ENCODE measurements at regions of chr1 and their contacts with region 1.

Region 1: GRCh38 chr1:156689035-156689952 is 12.1 kb upstream of the NES start:
- DNase-seq: peak; percentile 72 to 84
- H3K4me3 ChIP-seq: peak overlapping the region; percentile 48; the same call in 1 of the 2 replicates
- H3K27ac ChIP-seq: no peak overlapping the region
- H3K4me1 ChIP-seq: peaks cover 82% of the 10 kb centered on the region
- H3K27me3 ChIP-seq: no peaks in the 10 kb centered on the region
- CTCF ChIP-seq: peak; percentile 95

Region 2: GRCh38 chr1:156490401-156491032 is 198.8 kb before region 1 on chr1:
- CTCF ChIA-PET with region 1: no interaction called
- POLR2A ChIA-PET with region 1: no interaction called
- intact Hi-C with region 1: no loop called
- DNase-seq: no peak
- H3K4me3 ChIP-seq: no peak overlapping the region
- H3K27ac ChIP-seq: no peak overlapping the region
- H3K4me1 ChIP-seq: peaks cover 42% of the 10 kb centered on the region
- H3K27me3 ChIP-seq: no peaks in the 10 kb centered on the region
- CTCF ChIP-seq: no peak

Region 3: DNA sequence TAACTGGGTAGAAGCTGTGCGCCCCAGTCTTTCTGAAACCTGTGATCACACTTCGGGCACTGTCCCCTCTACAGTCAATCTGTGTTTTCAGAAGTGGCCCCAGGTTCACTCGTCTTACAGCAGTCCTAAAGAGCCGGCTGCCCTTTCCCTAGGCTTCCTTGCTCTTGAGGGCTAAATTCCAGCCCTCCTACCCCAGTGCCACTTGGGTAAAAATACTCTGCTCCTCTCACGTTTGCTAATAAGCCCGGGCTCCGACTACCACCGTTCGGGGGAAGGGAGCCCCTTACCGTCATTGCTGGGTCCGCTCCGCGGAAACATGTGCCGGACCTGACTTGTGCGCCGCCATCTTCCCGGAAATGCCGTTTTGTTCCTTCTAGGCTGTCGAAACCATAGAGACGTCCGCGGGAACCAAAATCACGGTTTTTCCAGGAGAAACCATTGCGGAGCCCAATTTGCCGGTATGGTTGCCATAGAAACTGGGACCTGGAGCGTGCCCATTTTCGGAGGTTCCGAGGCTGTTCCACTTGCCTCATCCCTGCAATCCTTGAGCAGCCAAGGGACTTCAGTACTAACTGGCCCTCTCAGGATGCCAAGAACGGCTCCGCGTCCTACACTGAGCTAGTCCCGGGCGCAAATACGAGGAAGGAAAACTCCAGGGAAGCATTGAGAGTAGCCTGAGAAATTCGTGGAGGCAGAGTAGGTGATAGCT is 88.0 kb before region 1 on chr1 and contains the start of gene GPATCH4:
- CTCF ChIA-PET with region 1: no interaction called
- POLR2A ChIA-PET with region 1: no interaction called
- intact Hi-C with region 1: no loop called
- DNase-seq: peak; percentile 63 to 65
- H3K4me3 ChIP-seq: peak within 1 kb of the TSS; percentile 77
- H3K27ac ChIP-seq: peak within 1 kb of the TSS; percentile 70
- H3K4me1 ChIP-seq: peaks cover 16% of the 10 kb centered on the region
- H3K27me3 ChIP-seq: no peaks in the 10 kb centered on the region
- CTCF ChIP-seq: no peak
- total RNA-seq, gene GPATCH4: 17.5 and 17.6 TPM in 2 replicates

Region 4: DNA sequence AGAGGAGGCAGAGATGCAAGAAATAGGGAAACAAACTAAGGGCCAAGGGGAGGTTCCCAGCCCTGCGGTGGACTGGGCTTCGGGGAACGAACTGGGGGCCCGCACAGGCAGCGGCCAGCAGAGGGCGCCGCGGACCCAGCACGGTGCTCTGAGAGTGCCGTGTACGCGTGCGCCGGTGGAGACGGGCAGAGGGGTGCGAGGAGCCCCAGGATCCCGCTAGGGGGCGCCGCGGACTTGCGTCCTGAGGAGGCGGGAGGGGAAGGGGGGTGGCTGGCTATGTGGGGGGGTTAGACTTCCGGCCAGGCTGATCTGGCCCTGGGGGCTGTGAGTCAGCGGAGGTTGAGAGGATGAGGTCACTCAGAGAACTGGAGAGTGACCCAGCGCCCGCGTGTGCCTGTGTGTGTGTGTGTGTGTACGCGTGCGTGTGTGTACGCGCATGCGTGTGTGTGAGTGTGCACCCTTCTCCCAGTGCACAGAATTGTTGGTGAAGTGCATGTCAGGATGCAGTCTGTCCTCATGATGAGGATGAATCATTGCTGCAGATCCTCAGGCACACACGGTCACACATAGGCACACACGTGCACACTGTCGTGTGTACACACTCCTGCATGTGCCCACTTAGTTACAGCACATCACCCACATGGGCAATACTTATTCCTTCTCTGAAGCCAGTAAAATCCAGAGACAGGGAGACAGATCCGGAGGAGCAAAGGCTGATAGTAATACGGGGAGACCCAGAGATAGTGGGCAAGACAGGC is 29.1 kb before region 1 on chr1:
- CTCF ChIA-PET with region 1: interaction called, 6 read pairs
- POLR2A ChIA-PET with region 1: interaction called, 5 read pairs
- intact Hi-C with region 1: loop called (anchors 1 kb)
- DNase-seq: peak; percentile 90 to 97
- H3K4me3 ChIP-seq: peak overlapping the region; percentile 73
- H3K27ac ChIP-seq: peak overlapping the region; percentile 86
- H3K4me1 ChIP-seq: peaks cover 25% of the 10 kb centered on the region
- H3K27me3 ChIP-seq: no peaks in the 10 kb centered on the region
- CTCF ChIP-seq: peak; percentile 98

Region 5: GRCh38 chr1:156712626-156713025 is 23.3 kb after region 1 on chr1:
- CTCF ChIA-PET with region 1: interaction called, 109 read pairs
- POLR2A ChIA-PET with region 1: no interaction called
- intact Hi-C with region 1: no loop called
- DNase-seq: peak; percentile 71 to 85
- H3K4me3 ChIP-seq: no peak overlapping the region
- H3K27ac ChIP-seq: peak overlapping the region; percentile 75
- H3K4me1 ChIP-seq: peaks cover 51% of the 10 kb centered on the region
- H3K27me3 ChIP-seq: no peaks in the 10 kb centered on the region
- CTCF ChIP-seq: no peak

Region 6: GRCh38 chr1:156767101-156767878 is 78.0 kb after region 1 on chr1 and contains the start of gene PRCC:
- CTCF ChIA-PET with region 1: interaction called, 3 read pairs
- POLR2A ChIA-PET with region 1: no interaction called
- intact Hi-C with region 1: loop called (anchors 5 kb)
- DNase-seq: peak; percentile 96 to 99
- H3K4me3 ChIP-seq: peak within 1 kb of the TSS; percentile 96
- H3K27ac ChIP-seq: peak within 1 kb of the TSS; percentile 76
- H3K4me1 ChIP-seq: peaks cover 18% of the 10 kb centered on the region
- H3K27me3 ChIP-seq: no peaks in the 10 kb centered on the region
- CTCF ChIP-seq: no peak
- total RNA-seq, gene PRCC: 47.8 and 56.6 TPM in 2 replicates

Region 7: DNA sequence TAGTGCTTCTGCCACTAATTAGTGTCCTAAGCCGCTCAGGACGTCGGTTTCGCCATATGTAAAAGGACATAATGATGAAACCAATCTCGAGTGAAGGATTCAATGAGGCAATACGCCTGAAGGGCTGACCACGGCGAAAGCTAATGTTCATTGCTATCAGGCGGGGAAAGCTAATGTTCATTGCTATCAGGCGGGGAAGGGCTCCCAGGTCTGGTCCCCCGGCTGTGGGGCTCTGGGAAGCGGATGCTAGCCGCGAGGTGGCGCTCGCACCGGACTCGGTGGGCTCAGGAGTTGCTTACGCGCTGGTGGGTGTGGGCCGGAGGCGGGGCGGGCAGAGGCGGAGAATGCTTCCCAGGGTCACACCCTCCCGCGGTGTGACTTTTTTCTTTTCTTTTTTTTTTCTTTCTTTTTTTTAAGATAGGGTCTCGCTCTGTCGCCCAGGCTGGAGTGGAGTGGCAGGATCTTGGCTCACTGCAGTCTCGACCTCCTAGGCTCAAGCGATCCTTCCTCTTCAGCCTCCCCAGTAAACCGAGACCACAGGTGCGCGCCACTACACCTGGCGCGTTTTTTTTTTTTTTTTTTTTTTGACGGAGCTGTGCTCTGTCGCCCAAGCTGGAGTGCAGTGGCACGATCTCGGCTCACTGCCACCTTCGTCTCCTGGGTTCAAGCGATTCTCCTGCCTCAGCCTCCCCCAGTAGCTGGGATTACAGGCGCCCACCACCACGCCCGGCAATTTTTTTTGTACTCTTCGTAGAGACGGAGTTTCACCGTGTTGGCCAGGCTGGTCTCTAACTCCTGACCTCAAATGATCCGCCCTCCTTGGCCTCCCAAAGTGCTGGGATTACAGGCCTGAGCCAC is 203.1 kb after region 1 on chr1:
- CTCF ChIA-PET with region 1: interaction called, 16 read pairs
- POLR2A ChIA-PET with region 1: interaction called, 5 read pairs
- intact Hi-C with region 1: loop called (anchors 1 kb)
- DNase-seq: peak; percentile 75 to 91
- H3K4me3 ChIP-seq: peak overlapping the region; percentile 24; the same call in 1 of the 2 replicates
- H3K27ac ChIP-seq: no peak overlapping the region
- H3K4me1 ChIP-seq: peaks cover 23% of the 10 kb centered on the region
- H3K27me3 ChIP-seq: peaks cover 8% of the 10 kb centered on the region
- CTCF ChIP-seq: peak; percentile 87